CD8-positive, alpha-beta T cell (primary cell): ENCODE measurements at regions of chr9 and their contacts with region 1.

Region 1: GRCh38 chr9:129835021-129835871 is at the starts of genes C9orf78 and USP20:
- DNase-seq: peak; percentile 95 to 99 (median 97)
- ATAC-seq: peak; percentile 93
- H3K4me3 ChIP-seq: peak within 1 kb of the TSS; percentile 86 to 93
- H3K4me3 Mint-ChIP-seq: peak within 1 kb of the TSS; percentile 99
- H3K27ac ChIP-seq: peak within 1 kb of the TSS; percentile 89 to 94
- H3K27ac Mint-ChIP-seq: peak within 1 kb of the TSS; percentile 98
- H3K4me1 ChIP-seq: peaks cover 53% of the 10 kb centered on the region
- H3K4me1 Mint-ChIP-seq: peaks cover 62% of the 10 kb centered on the region
- H3K27me3 ChIP-seq: no peaks in the 10 kb centered on the region
- H3K27me3 Mint-ChIP-seq: no peaks in the 10 kb centered on the region
- CTCF ChIP-seq: no peak
- total RNA-seq, gene C9orf78: 176 to 190 TPM
- total RNA-seq, gene USP20: 83.5 to 91.0 TPM

Region 2: DNA sequence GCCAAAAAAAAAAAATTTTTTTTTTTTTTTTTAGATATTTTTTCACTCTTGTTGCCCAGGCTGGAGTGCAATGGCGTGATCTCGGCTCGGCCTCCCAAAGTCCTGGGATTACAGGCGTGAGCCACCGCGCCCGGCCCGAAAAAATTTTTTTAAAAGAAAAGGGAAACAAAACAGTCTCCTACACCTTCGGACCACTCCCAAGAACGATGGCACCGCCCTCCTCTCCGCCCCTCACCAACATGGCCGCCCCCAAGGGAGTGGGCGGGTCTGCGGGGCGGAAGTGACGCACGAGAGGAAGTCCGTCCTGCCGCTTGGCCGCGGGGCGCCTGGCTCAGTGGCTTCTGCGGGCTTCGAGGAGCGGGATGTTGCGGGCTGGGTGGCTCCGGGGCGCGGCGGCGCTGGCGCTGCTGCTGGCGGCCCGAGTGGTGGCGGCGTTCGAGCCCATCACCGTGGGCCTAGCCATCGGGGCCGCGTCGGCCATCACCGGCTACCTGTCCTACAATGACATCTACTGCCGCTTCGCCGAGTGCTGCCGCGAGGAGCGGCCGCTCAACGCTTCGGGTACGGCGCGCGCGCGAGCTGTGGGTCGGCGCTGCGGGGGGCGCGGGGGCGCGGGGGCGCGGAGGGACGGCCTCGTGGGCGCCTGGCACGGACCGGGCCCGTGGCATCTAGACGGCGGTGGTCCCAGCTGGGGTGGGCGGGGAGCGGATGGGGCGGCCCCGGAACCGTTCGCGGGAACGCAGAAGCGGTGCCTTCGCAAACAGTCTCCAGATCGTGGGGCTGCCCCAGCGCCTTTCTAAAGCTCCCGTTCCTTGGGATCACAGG is 32.2 kb before region 1 on chr9 and contains the start of gene TOR1B:
- CTCF ChIA-PET with region 1: interaction called, 3 read pairs
- POLR2A ChIA-PET with region 1: interaction called, 5 read pairs
- intact Hi-C with region 1: loop called (anchors 1 kb)
- DNase-seq: peak; percentile 88 to 99 (median 95)
- ATAC-seq: peak; percentile 95
- H3K4me3 ChIP-seq: peak within 1 kb of the TSS; percentile 81 to 96
- H3K4me3 Mint-ChIP-seq: peak within 1 kb of the TSS; percentile 90
- H3K27ac ChIP-seq: peak within 1 kb of the TSS; percentile 72 to 90
- H3K27ac Mint-ChIP-seq: peak within 1 kb of the TSS; percentile 94
- H3K4me1 ChIP-seq: peaks cover 20% of the 10 kb centered on the region
- H3K4me1 Mint-ChIP-seq: peaks cover 28% of the 10 kb centered on the region
- H3K27me3 ChIP-seq: no peaks in the 10 kb centered on the region
- H3K27me3 Mint-ChIP-seq: no peaks in the 10 kb centered on the region
- CTCF ChIP-seq: no peak
- total RNA-seq, gene TOR1B: 21.3 to 22.4 TPM

Region 3: GRCh38 chr9:129823935-129824601 is 11.2 kb before region 1 on chr9 and contains the start of gene TOR1A:
- CTCF ChIA-PET with region 1: interaction called, 3 read pairs
- POLR2A ChIA-PET with region 1: interaction called, 3 read pairs
- intact Hi-C with region 1: loop called (anchors 1 kb)
- DNase-seq: peak; percentile 83 to 96 (median 91)
- ATAC-seq: peak; percentile 87
- H3K4me3 ChIP-seq: peak within 1 kb of the TSS; percentile 64 to 87
- H3K4me3 Mint-ChIP-seq: peak within 1 kb of the TSS; percentile 89
- H3K27ac ChIP-seq: peak within 1 kb of the TSS; percentile 44 to 53
- H3K27ac Mint-ChIP-seq: peak within 1 kb of the TSS; percentile 87
- H3K4me1 ChIP-seq: peaks cover 9% of the 10 kb centered on the region
- H3K4me1 Mint-ChIP-seq: peaks cover 16% of the 10 kb centered on the region
- H3K27me3 ChIP-seq: no peaks in the 10 kb centered on the region
- H3K27me3 Mint-ChIP-seq: no peaks in the 10 kb centered on the region
- CTCF ChIP-seq: no peak
- total RNA-seq, gene TOR1A: 18.9 to 19.6 TPM

Region 4: GRCh38 chr9:129868916-129869486 is 33.8 kb after region 1 on chr9:
- CTCF ChIA-PET with region 1: interaction called, 3 read pairs
- POLR2A ChIA-PET with region 1: interaction called, 8 read pairs
- intact Hi-C with region 1: loop called (anchors 1 kb)
- DNase-seq: peak; percentile 85 to 97 (median 93)
- ATAC-seq: peak; percentile 87
- H3K4me3 ChIP-seq: peak overlapping the region; percentile 19 to 51
- H3K4me3 Mint-ChIP-seq: peak overlapping the region; percentile 65
- H3K27ac ChIP-seq: peak overlapping the region; percentile 85
- H3K27ac Mint-ChIP-seq: peak overlapping the region; percentile 95
- H3K4me1 ChIP-seq: peaks cover 80% of the 10 kb centered on the region
- H3K4me1 Mint-ChIP-seq: peaks cover 76% of the 10 kb centered on the region
- H3K27me3 ChIP-seq: no peaks in the 10 kb centered on the region
- H3K27me3 Mint-ChIP-seq: no peaks in the 10 kb centered on the region
- CTCF ChIP-seq: no peak

Region 5: DNA sequence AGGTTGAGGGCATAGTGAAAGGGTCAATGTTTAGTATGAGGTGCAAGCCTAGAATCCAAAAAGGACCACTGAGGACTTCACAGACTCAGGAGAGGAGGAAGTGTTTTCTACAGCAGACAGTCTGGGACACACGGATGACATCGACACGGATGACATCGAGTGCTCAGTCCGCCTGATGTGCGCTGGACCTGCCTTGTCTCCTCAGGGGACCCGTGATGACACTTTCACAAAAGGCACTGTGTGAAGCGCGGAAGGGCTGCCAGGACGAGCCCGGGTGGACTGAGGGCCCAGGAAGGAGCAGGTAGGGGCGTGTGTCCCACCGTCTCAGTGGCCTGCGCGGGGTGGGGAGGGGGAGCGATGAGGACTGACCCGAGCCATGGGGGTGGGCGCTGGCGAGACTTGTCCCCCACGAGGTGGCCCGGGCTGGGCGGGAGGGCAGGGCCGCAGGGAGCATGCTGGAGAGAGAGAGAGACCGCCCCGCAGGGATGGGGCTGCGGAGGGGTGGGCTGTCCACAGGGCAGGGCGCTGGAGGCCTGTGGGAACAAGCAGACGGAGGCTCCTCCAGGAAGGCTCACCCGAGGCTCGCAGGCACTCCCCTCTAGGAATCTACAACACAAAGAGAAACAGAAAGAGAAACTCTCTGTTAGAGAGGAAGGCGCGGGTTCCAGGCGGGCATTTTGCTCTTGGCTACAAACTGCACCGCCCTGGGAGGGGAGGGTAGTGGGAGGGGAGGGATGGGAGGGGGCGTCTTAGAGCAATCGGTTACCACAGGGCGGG is 54.9 kb after region 1 on chr9:
- CTCF ChIA-PET with region 1: interaction called, 24 read pairs
- POLR2A ChIA-PET with region 1: interaction called, 21 read pairs
- intact Hi-C with region 1: no loop called
- DNase-seq: peak in 8 of 9 experiments; percentile 39 to 86 (median 68)
- ATAC-seq: no peak
- H3K4me3 ChIP-seq: peak overlapping the region; percentile 33 to 39
- H3K4me3 Mint-ChIP-seq: peak overlapping the region; percentile 89
- H3K27ac ChIP-seq: peak overlapping the region; percentile 91 to 98
- H3K27ac Mint-ChIP-seq: peak overlapping the region; percentile 100
- H3K4me1 ChIP-seq: peaks cover 89% of the 10 kb centered on the region
- H3K4me1 Mint-ChIP-seq: peaks cover 85% of the 10 kb centered on the region
- H3K27me3 ChIP-seq: no peaks in the 10 kb centered on the region
- H3K27me3 Mint-ChIP-seq: no peaks in the 10 kb centered on the region
- CTCF ChIP-seq: no peak

Region 6: DNA sequence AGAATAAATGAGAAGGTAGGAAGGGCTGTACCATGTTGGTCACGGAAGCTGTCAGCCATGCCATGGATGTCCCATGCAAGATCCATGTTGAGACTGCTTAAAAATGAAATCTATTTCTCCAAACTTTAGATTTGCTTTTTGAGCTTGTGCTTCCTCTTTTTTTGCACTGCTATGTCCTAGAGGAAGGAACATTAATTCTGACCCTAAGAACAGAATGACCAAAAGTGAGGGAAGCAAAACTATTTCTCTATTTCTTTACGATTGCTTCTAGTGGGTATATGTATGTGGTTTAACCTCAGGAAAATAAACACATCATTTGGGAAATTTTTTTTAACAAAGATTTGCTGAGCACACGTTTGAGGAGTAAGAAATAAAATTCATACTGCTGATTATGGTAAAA is 84.6 kb after region 1 on chr9:
- CTCF ChIA-PET with region 1: no interaction called
- POLR2A ChIA-PET with region 1: no interaction called
- intact Hi-C with region 1: no loop called
- DNase-seq: no peak
- ATAC-seq: no peak
- H3K4me3 ChIP-seq: no peak overlapping the region
- H3K4me3 Mint-ChIP-seq: no peak overlapping the region
- H3K27ac ChIP-seq: peak overlapping the region in 1 of 2 experiments; percentile 7
- H3K27ac Mint-ChIP-seq: peak overlapping the region; percentile 58
- H3K4me1 ChIP-seq: no peaks in the 10 kb centered on the region
- H3K4me1 Mint-ChIP-seq: peaks cover 31% of the 10 kb centered on the region
- H3K27me3 ChIP-seq: no peaks in the 10 kb centered on the region
- H3K27me3 Mint-ChIP-seq: no peaks in the 10 kb centered on the region
- CTCF ChIP-seq: no peak

Region 7: DNA sequence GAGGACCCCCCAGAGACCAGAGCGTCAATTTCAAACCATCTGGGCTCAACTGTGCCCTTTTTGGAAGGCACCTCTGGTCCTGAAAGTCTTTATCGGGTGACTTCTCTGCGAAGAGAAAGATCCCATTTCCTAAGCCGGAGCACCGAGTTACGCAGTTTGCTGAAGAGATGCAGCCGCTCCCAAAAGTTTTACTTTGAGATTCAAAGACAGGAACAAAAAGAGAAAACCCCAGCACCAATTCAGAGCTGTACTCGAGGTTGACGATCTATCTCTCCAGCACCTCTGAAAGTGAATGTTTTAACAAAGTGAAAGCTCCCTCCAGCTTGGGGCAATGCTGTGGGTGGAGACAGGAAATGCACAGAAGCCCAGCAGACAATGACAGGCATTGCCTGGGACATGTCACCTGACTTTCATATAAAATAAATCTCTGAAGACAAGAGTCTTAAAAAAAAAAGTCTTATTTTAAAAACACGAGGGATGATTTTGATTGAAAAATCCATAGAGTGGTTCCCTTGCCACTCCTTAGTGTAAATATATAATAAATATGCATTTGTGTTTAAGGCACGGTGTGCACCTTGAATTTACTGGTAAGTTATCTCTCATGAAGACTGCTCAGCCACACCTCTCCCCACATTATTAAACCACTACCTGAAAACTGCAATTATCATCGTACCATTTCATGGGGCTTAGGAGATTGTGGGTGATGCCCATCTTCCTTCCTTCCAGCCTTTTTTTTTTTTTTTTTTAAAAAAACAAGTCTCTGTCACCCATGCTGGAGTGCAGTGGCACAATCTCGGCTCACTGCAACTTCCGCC is 127.8 kb after region 1 on chr9:
- CTCF ChIA-PET with region 1: no interaction called
- POLR2A ChIA-PET with region 1: interaction called, 7 read pairs
- intact Hi-C with region 1: loop called in 1 of 2 experiments (anchors 10 kb)
- DNase-seq: peak; percentile 54 to 94 (median 73)
- ATAC-seq: peak; percentile 93
- H3K4me3 ChIP-seq: peak overlapping the region; percentile 48 to 54
- H3K4me3 Mint-ChIP-seq: peak overlapping the region; percentile 87
- H3K27ac ChIP-seq: peak overlapping the region; percentile 81 to 93
- H3K27ac Mint-ChIP-seq: peak overlapping the region; percentile 97
- H3K4me1 ChIP-seq: peaks cover 47% of the 10 kb centered on the region
- H3K4me1 Mint-ChIP-seq: peaks cover 68% of the 10 kb centered on the region
- H3K27me3 ChIP-seq: no peaks in the 10 kb centered on the region
- H3K27me3 Mint-ChIP-seq: no peaks in the 10 kb centered on the region
- CTCF ChIP-seq: no peak

Region 8: GRCh38 chr9:129979071-129979745 is 144.0 kb after region 1 on chr9:
- CTCF ChIA-PET with region 1: no interaction called
- POLR2A ChIA-PET with region 1: no interaction called
- intact Hi-C with region 1: no loop called
- DNase-seq: no peak
- ATAC-seq: no peak
- H3K4me3 ChIP-seq: no peak overlapping the region
- H3K4me3 Mint-ChIP-seq: no peak overlapping the region
- H3K27ac ChIP-seq: no peak overlapping the region
- H3K27ac Mint-ChIP-seq: peak overlapping the region; percentile 13
- H3K4me1 ChIP-seq: peaks cover 5% of the 10 kb centered on the region
- H3K4me1 Mint-ChIP-seq: peaks cover 48% of the 10 kb centered on the region
- H3K27me3 ChIP-seq: no peaks in the 10 kb centered on the region
- H3K27me3 Mint-ChIP-seq: no peaks in the 10 kb centered on the region
- CTCF ChIP-seq: no peak

Region 9: GRCh38 chr9:130053504-130054324 is 218.5 kb after region 1 on chr9 and contains the start of gene GPR107:
- CTCF ChIA-PET with region 1: interaction called, 3 read pairs
- POLR2A ChIA-PET with region 1: no interaction called
- intact Hi-C with region 1: loop called in 1 of 2 experiments (anchors 1 kb)
- DNase-seq: peak; percentile 46 to 87 (median 73)
- ATAC-seq: peak; percentile 96
- H3K4me3 ChIP-seq: peak within 1 kb of the TSS; percentile 94 to 99
- H3K4me3 Mint-ChIP-seq: peak within 1 kb of the TSS; percentile 92
- H3K27ac ChIP-seq: peak within 1 kb of the TSS; percentile 92 to 94
- H3K27ac Mint-ChIP-seq: peak within 1 kb of the TSS; percentile 93
- H3K4me1 ChIP-seq: peaks cover 26% of the 10 kb centered on the region
- H3K4me1 Mint-ChIP-seq: peaks cover 31% of the 10 kb centered on the region
- H3K27me3 ChIP-seq: no peaks in the 10 kb centered on the region
- H3K27me3 Mint-ChIP-seq: no peaks in the 10 kb centered on the region
- CTCF ChIP-seq: no peak
- total RNA-seq, gene GPR107: 23.7 to 25.2 TPM